ENCODE measurements at regions of chr3 and their contacts with region 1.

Region 1: GRCh38 chr3:38164966-38165680 is at the start of gene OXSR1:
- DNase-seq: peak; percentile 100
- ATAC-seq: peak; percentile 89
- H3K4me3 ChIP-seq: peak within 1 kb of the TSS; percentile 92
- H3K27ac ChIP-seq: peak within 1 kb of the TSS; percentile 100
- H3K4me1 ChIP-seq: peaks cover 4% of the 10 kb centered on the region; the same call in 1 of the 2 replicates
- H3K27me3 ChIP-seq: no peaks in the 10 kb centered on the region
- CTCF ChIP-seq: no peak
- EP300 ChIP-seq: no peak; a peak in 1 of 4 replicates
- POLR2A ChIP-seq: peak; percentile 93
- RAD21 ChIP-seq: no peak
- polyA plus RNA-seq, gene OXSR1: 12.4 to 16.9 TPM

Region 2: GRCh38 chr3:38210141-38210757 is 45.1 kb after region 1 on chr3:
- CTCF ChIA-PET with region 1: interaction called, 12 read pairs
- POLR2A ChIA-PET with region 1: interaction called, 11 read pairs
- RAD21 ChIA-PET with region 1: interaction called, 17 read pairs
- SMC1A ChIA-PET with region 1: interaction called, 7 read pairs
- in situ Hi-C with region 1: no loop called
- intact Hi-C with region 1: loop called (anchors 5 kb)
- DNase-seq: peak; percentile 65
- ATAC-seq: peak; percentile 92
- H3K4me3 ChIP-seq: no peak overlapping the region
- H3K27ac ChIP-seq: peak overlapping the region; percentile 59
- H3K4me1 ChIP-seq: peaks cover 20% of the 10 kb centered on the region
- H3K27me3 ChIP-seq: no peaks in the 10 kb centered on the region
- CTCF ChIP-seq: no peak
- EP300 ChIP-seq: peak in 1 of 2 experiments; percentile 35; a peak in 1 of 4 replicates
- POLR2A ChIP-seq: no peak
- RAD21 ChIP-seq: no peak

Region 3: DNA sequence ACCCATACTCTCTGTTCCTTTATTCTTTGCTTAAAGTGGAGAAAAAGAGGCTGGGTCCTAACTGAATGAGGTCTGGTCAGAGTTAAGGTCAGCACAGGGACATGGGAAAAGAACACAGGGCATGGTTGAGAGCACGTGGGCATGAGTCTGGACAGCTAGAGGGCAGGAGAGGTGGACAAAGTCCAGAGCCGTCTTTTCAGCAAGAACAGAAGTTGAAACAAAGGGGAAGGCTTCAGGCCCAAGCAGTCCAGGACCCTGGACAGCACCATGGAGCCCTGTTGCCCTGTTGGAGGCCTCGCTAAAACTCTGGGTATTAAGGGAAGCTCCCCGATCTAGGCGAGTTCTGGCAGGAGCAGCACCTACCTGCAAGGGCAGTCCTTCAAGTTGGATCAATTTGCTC is 232.2 kb after region 1 on chr3:
- CTCF ChIA-PET with region 1: no interaction called
- POLR2A ChIA-PET with region 1: no interaction called
- RAD21 ChIA-PET with region 1: no interaction called
- SMC1A ChIA-PET with region 1: no interaction called
- in situ Hi-C with region 1: no loop called
- intact Hi-C with region 1: no loop called
- DNase-seq: no peak
- ATAC-seq: no peak
- H3K4me3 ChIP-seq: no peak overlapping the region
- H3K27ac ChIP-seq: no peak overlapping the region
- H3K4me1 ChIP-seq: no peaks in the 10 kb centered on the region
- H3K27me3 ChIP-seq: no peaks in the 10 kb centered on the region
- CTCF ChIP-seq: no peak
- EP300 ChIP-seq: no peak
- POLR2A ChIP-seq: no peak
- RAD21 ChIP-seq: no peak